ENCODE measurements at regions of chr10 and their contacts with region 1.

Region 1: DNA sequence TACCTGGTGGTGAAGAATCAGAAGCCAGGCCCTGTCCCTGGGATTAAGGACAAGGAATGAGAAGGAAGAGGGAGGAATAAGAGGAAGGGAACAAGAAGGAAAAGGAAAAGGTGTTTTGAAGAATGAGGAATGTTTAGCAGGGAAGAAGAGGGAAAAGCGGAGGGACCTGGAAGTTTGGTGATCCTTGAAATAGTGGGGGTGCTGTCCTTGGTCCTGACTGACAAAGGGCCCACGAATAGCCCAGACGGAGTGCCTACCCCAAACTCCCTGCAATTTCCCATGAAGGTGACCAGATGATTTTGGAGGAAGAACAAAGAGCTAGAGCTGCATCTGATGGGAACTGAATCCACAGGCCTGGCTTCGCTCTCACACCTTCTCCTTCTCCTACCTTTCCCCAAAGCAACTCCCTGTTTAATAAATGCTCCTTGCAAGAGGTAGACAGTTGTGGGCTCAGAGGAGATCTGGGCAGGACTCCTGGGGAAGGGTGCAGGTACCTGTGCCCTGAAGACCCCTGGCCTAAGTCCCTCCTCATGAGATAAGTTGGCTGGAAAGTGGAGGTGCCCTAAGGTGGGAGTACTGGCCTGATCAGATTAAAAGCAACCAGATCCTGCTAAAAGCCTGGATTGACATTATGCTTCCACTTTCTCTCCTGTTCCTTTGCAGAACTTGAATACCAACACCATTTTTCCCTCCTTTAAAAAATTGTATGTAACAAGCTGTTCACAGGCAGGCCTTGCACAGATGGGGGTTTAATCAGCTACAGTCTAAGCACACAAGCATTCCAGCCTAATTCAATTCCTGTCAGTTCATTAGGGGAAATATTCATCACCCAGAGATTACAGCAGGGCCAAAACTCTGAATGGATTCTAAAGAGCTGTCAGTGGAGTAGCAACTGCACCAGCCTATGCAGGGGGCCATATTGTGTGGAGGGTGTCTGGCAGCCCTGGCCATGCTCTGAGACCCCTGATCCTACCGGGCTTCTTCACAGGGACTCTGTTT is 19.4 kb downstream of the KAZALD1 start:
- DNase-seq: no peak
- ATAC-seq: peak; percentile 31
- H3K4me3 ChIP-seq: no peak overlapping the region
- H3K4me3 Mint-ChIP-seq: no peak overlapping the region
- H3K27ac ChIP-seq: no peak overlapping the region
- H3K27ac Mint-ChIP-seq: no peak overlapping the region
- H3K4me1 ChIP-seq: no peaks in the 10 kb centered on the region
- H3K4me1 Mint-ChIP-seq: no peaks in the 10 kb centered on the region
- H3K27me3 ChIP-seq: no peaks in the 10 kb centered on the region
- H3K27me3 Mint-ChIP-seq: peaks cover 54% of the 10 kb centered on the region
- CTCF ChIP-seq: no peak

Region 2: GRCh38 chr10:101067356-101068083 is 13.7 kb before region 1 on chr10:
- CTCF ChIA-PET with region 1: interaction called, 11 read pairs
- POLR2A ChIA-PET with region 1: no interaction called
- intact Hi-C with region 1: no loop called
- DNase-seq: peak; percentile 49 to 86 (median 77)
- ATAC-seq: peak; percentile 82
- H3K4me3 ChIP-seq: peak overlapping the region; percentile 59 to 64
- H3K4me3 Mint-ChIP-seq: peak overlapping the region; percentile 91
- H3K27ac ChIP-seq: no peak overlapping the region
- H3K27ac Mint-ChIP-seq: no peak overlapping the region
- H3K4me1 ChIP-seq: peaks cover 29% of the 10 kb centered on the region
- H3K4me1 Mint-ChIP-seq: peaks cover 18% of the 10 kb centered on the region
- H3K27me3 ChIP-seq: peaks cover 35 to 39% of the 10 kb centered on the region in 2 experiments
- H3K27me3 Mint-ChIP-seq: peaks cover 41% of the 10 kb centered on the region
- CTCF ChIP-seq: peak; percentile 88

Region 3: DNA sequence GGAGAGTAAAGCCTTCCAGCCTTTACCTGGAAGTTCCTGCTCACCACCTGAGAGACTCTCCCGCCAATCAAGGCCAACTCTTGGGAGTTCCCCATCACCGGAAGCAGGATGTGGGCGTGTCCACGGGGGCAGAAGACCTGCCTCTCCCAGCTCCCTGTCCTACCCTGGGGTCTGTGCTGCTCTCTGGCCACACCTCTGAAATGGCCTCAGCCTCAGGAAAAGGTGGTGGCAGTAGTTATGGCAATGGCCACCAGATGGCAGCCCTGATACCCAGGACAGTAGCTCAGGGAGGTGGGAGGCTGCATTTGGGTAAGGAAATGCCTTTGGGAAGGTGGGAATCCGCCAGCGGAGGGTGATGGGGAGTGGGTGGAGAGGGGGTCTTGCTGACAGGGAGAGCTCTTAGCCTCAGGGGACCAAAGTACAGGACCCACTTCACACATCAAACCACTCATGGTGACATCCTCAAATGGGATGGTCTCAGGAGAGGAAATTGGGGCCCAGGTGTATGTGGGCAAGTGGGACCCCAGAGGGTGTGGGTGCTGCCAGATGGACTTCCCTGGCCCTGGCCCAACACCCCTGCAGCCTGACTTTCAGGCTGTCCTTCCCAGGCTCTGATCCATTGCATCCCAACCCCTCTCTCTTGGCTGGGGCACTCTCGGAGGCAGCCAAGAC is 14.4 kb after region 1 on chr10:
- CTCF ChIA-PET with region 1: interaction called, 29 read pairs
- POLR2A ChIA-PET with region 1: no interaction called
- intact Hi-C with region 1: no loop called
- DNase-seq: peak; percentile 43 to 80 (median 71)
- ATAC-seq: peak; percentile 97
- H3K4me3 ChIP-seq: no peak overlapping the region
- H3K4me3 Mint-ChIP-seq: no peak overlapping the region
- H3K27ac ChIP-seq: no peak overlapping the region
- H3K27ac Mint-ChIP-seq: no peak overlapping the region
- H3K4me1 ChIP-seq: peaks cover 5% of the 10 kb centered on the region
- H3K4me1 Mint-ChIP-seq: peaks cover 2% of the 10 kb centered on the region
- H3K27me3 ChIP-seq: peaks cover 3 to 11% of the 10 kb centered on the region in 2 experiments
- H3K27me3 Mint-ChIP-seq: peaks cover 51% of the 10 kb centered on the region
- CTCF ChIP-seq: peak; percentile 79